Activated naive CD4-positive, alpha-beta T cell treated with anti-CD3 and anti-CD28 coated beads, Interleukin-2, amount 10 ng/mL, durations not matched to agents 7 days and 5 days (primary cell): ENCODE measurements at regions of chr2 and their contacts with region 1.

Region 1: DNA sequence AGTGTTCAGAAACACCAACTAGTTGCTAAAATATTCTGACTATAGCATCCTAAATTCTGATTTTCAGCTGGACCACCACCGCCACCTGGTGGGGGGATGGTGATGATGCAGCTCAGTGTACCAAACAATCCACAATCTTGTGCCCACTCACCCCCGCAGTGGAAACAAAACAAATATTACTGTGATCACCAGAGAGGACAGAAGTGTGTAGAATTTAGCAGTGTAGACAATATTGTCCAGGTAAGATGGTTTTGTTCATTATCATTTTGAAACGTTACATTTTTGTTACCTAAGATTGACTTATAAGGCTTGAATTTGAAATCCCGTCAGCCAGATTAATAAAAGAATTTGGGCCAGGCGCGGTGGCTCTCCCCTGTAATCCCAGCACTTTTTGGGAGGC is 31.7 kb upstream of the UBXN4 start:
- DNase-seq: peak; percentile 79
- H3K4me3 Mint-ChIP-seq: no peak overlapping the region
- H3K27ac Mint-ChIP-seq: no peak overlapping the region
- H3K4me1 Mint-ChIP-seq: no peaks in the 10 kb centered on the region
- H3K27me3 Mint-ChIP-seq: no peaks in the 10 kb centered on the region

Region 2: DNA sequence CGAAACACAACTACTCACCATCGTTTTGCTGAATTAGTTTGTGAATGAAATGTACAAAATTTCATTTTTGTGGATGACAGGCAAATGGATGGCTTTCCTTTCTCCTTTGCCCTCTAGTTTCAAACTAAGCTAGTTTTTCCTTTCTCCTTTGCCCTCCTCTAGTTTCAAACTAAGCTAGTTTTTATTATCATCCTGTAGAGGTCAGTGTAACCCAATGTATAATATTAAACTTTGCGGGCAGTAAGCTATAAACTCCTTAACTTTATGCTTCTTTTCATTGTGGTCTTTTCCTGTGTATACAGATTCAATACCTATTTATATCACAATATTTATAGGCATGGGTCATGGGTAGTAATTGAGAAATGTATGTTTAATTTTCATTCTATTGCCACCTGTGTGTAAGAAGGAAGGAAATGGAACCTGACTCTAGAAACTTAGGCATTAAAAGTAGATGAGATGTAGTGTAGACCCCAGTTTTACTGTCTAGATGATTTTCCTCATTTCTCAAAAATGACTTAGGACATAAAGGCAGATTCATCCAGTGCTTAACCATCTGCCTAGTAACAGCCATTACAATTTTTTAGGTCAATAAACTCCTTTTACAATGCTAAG is 720.9 kb before region 1 on chr2:
- CTCF ChIA-PET with region 1: interaction called, 17 read pairs
- DNase-seq: no peak
- H3K4me3 Mint-ChIP-seq: no peak overlapping the region
- H3K27ac Mint-ChIP-seq: no peak overlapping the region
- H3K4me1 Mint-ChIP-seq: no peaks in the 10 kb centered on the region
- H3K27me3 Mint-ChIP-seq: peaks cover 17% of the 10 kb centered on the region

Region 3: DNA sequence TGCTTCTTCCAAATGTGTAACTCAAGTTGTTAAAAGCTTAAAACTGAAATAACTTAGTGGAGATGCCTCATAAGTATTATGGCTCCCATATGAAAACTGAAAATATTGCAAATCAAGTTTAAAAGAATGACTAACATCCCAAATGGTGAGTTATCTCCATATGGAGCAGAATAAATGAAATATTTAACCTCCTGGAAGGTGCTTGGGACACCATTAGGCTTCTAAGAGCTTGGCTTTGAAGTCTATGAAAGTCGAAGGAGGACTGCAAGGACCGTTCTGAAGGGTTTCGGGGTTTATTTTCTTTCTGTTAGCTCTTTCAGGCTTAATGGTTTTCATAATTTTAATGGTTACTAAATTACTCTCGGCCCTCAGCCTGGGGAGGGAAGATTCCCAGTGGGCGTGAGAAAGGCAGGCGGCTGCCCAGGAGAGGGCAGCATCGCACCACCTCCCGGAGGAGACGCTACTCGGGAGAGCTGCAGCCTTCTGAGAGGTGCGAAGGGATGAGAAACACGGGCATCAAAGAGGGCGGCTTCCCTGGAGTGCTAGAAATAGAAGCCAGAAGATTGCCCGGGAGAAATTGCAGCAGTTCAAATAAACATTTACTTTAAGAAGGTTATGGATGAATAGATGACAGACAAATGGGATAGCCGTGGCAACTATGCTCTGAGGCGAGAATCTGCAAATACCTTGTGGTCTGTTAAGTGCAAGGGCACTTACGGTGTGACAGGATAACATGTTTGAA is 705.8 kb before region 1 on chr2:
- CTCF ChIA-PET with region 1: interaction called, 56 read pairs
- DNase-seq: peak; percentile 77
- H3K4me3 Mint-ChIP-seq: no peak overlapping the region
- H3K27ac Mint-ChIP-seq: no peak overlapping the region
- H3K4me1 Mint-ChIP-seq: peaks cover 3% of the 10 kb centered on the region
- H3K27me3 Mint-ChIP-seq: peaks cover 14% of the 10 kb centered on the region

Region 4: DNA sequence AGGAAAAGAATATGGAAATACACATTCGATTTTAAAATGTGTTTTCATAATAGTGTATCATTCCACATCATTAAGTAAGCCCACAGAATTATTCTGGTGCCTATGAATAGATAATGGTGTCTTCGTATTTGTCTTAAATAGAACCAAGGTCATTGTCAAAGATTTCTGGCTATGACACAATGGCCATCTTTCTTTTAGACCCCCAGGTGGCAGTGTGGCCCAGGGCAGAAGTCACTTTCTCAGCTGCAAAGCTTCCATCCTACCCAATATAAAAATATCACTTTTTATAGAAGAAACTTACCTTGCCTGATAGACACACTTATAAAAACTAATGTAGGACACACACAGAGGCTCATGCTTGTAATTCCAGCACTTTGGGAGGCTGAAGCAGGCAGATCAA is 236.4 kb before region 1 on chr2:
- CTCF ChIA-PET with region 1: interaction called, 54 read pairs
- DNase-seq: peak; percentile 46
- H3K4me3 Mint-ChIP-seq: no peak overlapping the region
- H3K27ac Mint-ChIP-seq: no peak overlapping the region
- H3K4me1 Mint-ChIP-seq: no peaks in the 10 kb centered on the region
- H3K27me3 Mint-ChIP-seq: no peaks in the 10 kb centered on the region

Region 5: DNA sequence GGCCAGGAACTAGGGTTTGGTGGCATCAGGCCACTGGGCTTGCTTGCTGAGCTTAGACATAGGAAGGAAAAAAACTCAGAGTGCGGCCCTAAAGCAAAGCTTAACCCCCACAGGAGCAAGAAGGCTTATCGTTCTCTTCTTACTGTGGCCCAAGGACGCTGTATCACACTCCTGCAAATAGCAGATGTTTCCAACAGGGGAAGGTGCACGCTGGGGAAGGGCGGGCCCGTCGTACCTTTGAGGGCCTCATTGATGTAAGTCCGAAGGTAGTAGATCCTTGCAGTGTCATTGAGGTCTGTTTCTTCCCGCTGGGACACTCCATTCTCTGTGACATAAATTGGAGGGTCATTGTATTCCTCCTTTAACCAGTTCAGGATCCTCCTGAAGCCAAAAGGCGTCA is 80.4 kb after region 1 on chr2:
- CTCF ChIA-PET with region 1: no interaction called
- DNase-seq: no peak
- H3K4me3 Mint-ChIP-seq: no peak overlapping the region
- H3K27ac Mint-ChIP-seq: no peak overlapping the region
- H3K4me1 Mint-ChIP-seq: peaks cover 15% of the 10 kb centered on the region
- H3K27me3 Mint-ChIP-seq: peaks cover 10% of the 10 kb centered on the region